Mucosa of descending colon (tissue), 3 donors: ENCODE measurements at regions of chr16 and their contacts with region 1.

Region 1: DNA sequence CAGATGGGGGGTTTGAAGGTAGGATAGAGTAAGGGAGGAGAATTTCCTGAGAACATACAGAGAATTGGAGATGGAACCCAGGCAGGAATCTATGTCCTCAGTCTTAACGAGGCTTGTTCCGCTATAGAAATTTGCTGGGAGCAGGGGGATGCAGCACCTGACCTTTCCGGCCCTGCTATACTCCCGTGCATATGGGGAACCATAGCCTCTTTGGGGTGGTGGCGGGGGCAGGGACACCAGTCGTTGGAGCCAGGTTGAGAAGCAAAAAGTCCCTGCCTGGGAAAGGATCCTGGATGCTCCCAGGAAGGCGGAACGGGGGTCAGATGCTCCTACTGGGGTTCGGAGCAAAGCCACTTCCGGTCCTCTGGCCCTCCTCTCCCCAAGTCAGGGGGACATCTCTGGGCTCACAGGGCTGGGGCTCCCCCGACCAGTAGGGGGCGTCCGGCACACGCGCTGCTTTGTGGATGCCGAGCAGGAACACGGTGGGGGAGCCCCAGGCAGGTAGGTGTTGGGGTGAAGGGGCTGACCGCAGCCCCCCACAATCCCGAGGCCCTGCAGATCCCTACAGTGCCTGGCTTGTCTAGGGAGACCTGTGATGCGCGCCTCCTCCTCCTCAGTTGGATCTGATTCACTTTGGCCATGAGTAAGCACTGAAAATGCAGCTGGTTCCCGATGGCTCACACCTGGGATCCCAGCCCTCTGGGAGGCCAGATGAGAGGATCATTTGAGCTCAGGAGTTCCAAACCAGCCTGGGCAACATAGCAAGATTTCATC is 15.5 kb upstream of the TFAP4 start:
- DNase-seq: peak; percentile 77 to 88 (median 84)
- ATAC-seq: peak; percentile 89
- H3K4me3 ChIP-seq: no peak overlapping the region
- H3K4me1 ChIP-seq: peaks cover 6% of the 10 kb centered on the region
- CTCF ChIP-seq: peak; percentile 94

Region 2: DNA sequence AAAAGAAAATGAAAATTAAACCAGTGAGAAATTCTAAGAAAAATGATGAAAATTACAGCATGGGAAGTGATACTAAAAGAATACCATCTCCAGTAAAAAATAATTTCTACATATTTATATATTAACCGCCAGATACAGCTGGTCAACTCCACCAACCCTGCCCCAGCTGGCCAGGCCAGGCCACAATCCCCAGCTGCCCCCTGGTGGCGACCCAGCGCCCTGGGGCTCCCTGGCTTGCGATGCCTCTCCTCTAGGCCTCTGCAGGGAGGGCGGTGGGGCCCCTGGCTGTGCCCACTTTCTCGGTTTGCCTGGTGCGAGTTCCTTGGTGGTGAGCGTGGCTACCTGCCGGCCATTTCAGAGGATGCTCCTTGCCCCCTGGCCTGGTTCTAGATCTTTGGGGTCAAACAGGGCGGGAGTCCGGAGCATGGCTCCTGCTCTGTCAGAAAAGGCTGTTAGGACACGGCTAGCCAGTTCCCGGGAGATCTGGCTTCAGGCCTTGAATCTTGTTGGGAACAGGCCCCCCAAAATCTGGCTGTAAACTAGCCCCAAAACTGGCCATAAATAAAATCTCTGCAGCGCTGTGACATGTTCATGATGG is 42.0 kb after region 1 on chr16:
- intact Hi-C with region 1: loop called (anchors 5 to 10 kb)
- DNase-seq: peak; percentile 78 to 89 (median 89)
- ATAC-seq: peak; percentile 83
- H3K4me3 ChIP-seq: no peak overlapping the region
- H3K4me1 ChIP-seq: peaks cover 11% of the 10 kb centered on the region
- CTCF ChIP-seq: peak; percentile 95